ENCODE measurements at regions of chr19 and their contacts with region 1.

Region 1: GRCh38 chr19:10259162-10259905 is 7.3 kb downstream of the MRPL4 start:
- DNase-seq: peak; percentile 87
- H3K4me3 Mint-ChIP-seq: no peak overlapping the region
- H3K27ac Mint-ChIP-seq: no peak overlapping the region
- H3K4me1 Mint-ChIP-seq: no peaks in the 10 kb centered on the region
- H3K27me3 Mint-ChIP-seq: no peaks in the 10 kb centered on the region
- CTCF ChIP-seq: peak; percentile 57

Region 2: DNA sequence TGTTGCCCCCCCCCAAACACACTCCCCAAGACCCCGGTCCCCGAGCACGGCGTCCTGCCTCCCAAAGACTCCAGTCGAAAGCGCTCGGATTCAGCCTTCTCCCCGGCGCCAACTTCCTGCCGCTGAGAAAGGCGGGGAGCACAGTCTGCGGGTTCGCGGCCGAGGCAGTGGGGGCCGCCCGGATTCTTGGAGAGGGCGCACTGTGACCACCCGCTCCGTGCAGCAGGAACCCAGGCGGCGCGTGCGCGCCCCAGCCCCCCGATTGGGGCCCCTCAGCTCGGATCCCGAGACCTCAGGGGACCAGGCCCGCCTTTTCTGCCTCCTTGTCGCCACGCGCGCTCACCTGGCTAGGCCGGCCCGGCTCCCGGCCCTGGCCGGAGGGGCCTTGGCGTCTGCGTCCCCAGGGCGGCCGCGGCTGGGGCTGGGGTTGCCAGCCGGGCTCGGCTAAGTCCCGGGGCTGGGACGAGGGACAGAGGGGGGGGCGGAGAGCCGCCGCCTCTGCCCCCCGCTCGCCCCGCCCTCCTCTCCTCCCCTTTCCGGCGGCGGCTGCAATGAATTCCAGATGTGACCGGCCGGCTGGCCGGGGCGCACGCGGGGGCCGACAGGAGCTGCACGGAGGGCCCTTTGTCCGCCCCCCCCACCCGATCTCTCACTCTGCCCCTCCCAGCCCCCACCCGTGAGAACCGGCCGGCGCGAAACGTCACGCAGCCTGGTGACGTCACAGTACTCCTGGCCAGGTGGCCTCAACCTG is 28.3 kb before region 1 on chr19 and contains the start of gene S1PR2:
- CTCF ChIA-PET with region 1: no interaction called
- intact Hi-C with region 1: no loop called
- DNase-seq: peak; percentile 71
- H3K4me3 Mint-ChIP-seq: peak within 1 kb of the TSS; percentile 68
- H3K27ac Mint-ChIP-seq: no peak within 1 kb of the TSS
- H3K4me1 Mint-ChIP-seq: no peaks in the 10 kb centered on the region
- H3K27me3 Mint-ChIP-seq: no peaks in the 10 kb centered on the region
- CTCF ChIP-seq: no peak
- total RNA-seq, gene S1PR2: 4.8 and 5.3 TPM in 2 replicates

Region 3: GRCh38 chr19:10269333-10270179 is 10.2 kb after region 1 on chr19:
- CTCF ChIA-PET with region 1: interaction called, 40 read pairs
- intact Hi-C with region 1: no loop called
- DNase-seq: peak; percentile 90
- H3K4me3 Mint-ChIP-seq: peak overlapping the region; percentile 71
- H3K27ac Mint-ChIP-seq: peak overlapping the region; percentile 42
- H3K4me1 Mint-ChIP-seq: peaks cover 18% of the 10 kb centered on the region
- H3K27me3 Mint-ChIP-seq: no peaks in the 10 kb centered on the region
- CTCF ChIP-seq: peak; percentile 62

Region 4: DNA sequence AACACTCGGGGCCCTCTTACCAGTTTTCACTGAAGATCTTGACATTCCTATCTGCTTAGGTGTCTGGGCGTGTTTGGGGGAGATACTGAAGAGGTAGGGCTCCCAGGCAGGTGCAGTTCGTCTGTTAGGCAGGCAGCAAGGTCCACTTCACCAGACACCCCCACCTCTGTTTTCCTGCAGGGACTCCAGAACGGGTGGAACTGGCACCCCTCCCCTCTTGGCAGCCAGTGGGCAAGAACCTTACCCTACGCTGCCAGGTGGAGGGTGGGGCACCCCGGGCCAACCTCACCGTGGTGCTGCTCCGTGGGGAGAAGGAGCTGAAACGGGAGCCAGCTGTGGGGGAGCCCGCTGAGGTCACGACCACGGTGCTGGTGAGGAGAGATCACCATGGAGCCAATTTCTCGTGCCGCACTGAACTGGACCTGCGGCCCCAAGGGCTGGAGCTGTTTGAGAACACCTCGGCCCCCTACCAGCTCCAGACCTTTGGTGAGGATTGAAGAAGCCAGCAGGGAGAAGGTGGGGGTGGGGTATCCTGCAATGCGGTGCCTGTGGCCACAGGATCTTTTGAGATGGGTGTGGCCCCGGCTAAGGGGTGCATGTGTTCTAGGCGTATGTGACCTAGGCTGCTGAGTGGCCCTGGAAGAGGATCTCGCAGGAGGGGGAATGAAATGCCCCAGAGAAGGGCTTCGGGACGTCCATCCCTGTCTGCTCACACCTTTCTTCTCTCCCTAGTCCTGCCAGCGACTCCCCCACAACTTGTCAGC is 24.1 kb after region 1 on chr19:
- CTCF ChIA-PET with region 1: no interaction called
- intact Hi-C with region 1: no loop called
- DNase-seq: no peak
- H3K4me3 Mint-ChIP-seq: no peak overlapping the region
- H3K27ac Mint-ChIP-seq: no peak overlapping the region
- H3K4me1 Mint-ChIP-seq: peaks cover 1% of the 10 kb centered on the region
- H3K27me3 Mint-ChIP-seq: no peaks in the 10 kb centered on the region
- CTCF ChIP-seq: no peak

Region 5: DNA sequence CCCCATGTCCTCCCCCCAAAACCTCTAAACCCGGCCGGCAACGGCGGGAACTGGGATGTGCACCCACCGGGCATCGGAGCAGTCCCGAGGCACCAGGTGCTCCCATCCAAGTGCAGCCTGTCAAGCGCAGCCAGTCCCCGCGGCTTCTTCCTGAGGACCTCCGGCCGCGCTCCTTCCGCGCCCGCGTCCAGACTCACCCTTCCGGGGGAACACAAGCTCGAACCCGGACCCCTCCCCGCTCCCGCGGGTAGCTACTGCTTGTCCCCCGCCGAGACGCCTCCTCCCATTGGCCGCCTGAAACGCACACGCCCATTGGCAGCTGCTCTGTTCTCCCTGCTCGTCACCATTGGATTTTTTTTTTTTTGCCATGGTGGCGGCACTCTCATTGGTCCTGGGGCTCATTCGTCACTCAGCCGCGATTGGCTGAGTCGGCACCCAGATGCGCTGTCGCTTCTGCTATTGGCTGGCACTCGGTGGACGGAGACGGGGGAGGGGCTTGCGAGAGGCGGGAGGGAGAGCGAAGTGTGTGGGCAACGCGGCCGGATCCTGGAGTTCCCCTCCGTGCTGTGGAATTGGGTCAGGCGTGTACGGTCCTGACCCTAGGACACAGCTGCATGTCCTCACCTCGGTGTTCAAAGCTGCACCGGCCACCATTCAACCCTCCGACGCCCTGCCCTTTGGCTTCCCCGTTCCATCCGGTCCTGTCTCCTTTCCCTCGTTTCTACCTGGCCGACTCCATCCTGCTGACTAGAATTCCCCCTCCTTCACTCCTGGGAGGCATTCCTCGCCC is 121.2 kb after region 1 on chr19 and contains the start of gene TYK2:
- CTCF ChIA-PET with region 1: interaction called, 11 read pairs
- intact Hi-C with region 1: no loop called
- DNase-seq: peak; percentile 92
- H3K4me3 Mint-ChIP-seq: peak within 1 kb of the TSS; percentile 94
- H3K27ac Mint-ChIP-seq: peak within 1 kb of the TSS; percentile 98
- H3K4me1 Mint-ChIP-seq: peaks cover 12% of the 10 kb centered on the region
- H3K27me3 Mint-ChIP-seq: no peaks in the 10 kb centered on the region
- CTCF ChIP-seq: no peak
- total RNA-seq, gene TYK2: 120 and 130 TPM in 2 replicates

Region 6: DNA sequence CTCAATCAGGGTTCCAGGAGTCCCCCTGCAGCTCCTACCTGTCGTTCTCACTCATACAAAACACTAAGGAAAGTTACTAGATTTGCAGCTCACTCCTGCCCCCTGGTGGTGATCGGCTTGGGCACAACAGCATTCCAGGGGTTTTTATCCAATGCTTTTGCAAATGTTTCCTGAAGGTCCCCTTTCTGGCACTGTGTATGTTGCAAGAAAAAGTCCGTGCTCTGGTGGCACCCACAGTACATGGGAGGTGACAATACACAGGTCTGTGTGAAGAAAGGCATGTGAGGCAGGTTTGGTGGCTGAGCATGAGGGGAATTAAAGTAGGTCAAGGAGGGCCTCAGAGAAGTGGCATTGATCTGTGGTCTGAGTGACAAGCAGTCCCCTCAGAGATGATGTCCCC is 129.6 kb after region 1 on chr19:
- CTCF ChIA-PET with region 1: interaction called, 52 read pairs
- intact Hi-C with region 1: loop called (anchors 2 kb)
- DNase-seq: peak; percentile 86
- H3K4me3 Mint-ChIP-seq: no peak overlapping the region
- H3K27ac Mint-ChIP-seq: peak overlapping the region; percentile 66
- H3K4me1 Mint-ChIP-seq: no peaks in the 10 kb centered on the region
- H3K27me3 Mint-ChIP-seq: no peaks in the 10 kb centered on the region
- CTCF ChIP-seq: peak; percentile 82

Region 7: DNA sequence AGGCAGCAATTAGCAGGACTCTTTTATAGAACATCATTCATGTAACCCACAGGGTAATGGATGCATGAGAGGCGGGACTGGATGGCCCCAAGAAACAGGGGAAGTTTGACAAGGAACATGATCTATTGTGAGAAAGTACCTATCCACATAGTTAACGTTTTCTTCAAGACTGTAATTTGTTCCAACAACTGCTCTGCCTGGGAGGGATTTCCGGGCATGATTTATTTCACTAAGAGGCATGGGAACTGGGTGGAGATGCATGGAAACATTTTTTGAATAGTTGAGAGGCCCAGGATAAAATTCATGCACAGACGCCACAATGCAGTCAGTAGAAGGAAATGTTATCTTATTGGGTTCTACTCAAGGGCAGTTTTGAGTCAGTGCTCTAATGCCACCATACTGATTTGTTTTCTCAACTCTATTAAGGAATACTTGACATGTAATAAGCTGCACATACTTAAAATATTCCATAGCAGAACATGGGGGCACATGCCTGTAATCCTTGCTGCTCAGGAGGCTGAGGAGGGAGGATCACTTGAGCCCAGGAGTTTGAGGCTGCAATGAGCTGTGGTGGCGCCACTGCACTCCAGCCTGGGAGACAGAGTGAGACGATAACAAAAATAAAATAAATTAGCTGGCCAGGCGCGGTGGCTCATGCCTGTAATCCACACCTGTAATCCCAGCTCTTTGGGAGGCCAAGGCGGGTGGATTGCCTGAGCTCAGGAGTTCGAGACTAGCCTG is 274.5 kb after region 1 on chr19:
- CTCF ChIA-PET with region 1: no interaction called
- intact Hi-C with region 1: no loop called
- DNase-seq: no peak
- H3K4me3 Mint-ChIP-seq: no peak overlapping the region
- H3K27ac Mint-ChIP-seq: no peak overlapping the region
- H3K4me1 Mint-ChIP-seq: no peaks in the 10 kb centered on the region
- H3K27me3 Mint-ChIP-seq: peaks cover 13% of the 10 kb centered on the region
- CTCF ChIP-seq: no peak

Measured in Calu3 (cell line).